Activated CD8-positive, alpha-beta T cell treated with anti-CD3 and anti-CD28 coated beads for 36 hours (primary cell): ENCODE measurements at regions of chr9 and their contacts with region 1.

Region 1: DNA sequence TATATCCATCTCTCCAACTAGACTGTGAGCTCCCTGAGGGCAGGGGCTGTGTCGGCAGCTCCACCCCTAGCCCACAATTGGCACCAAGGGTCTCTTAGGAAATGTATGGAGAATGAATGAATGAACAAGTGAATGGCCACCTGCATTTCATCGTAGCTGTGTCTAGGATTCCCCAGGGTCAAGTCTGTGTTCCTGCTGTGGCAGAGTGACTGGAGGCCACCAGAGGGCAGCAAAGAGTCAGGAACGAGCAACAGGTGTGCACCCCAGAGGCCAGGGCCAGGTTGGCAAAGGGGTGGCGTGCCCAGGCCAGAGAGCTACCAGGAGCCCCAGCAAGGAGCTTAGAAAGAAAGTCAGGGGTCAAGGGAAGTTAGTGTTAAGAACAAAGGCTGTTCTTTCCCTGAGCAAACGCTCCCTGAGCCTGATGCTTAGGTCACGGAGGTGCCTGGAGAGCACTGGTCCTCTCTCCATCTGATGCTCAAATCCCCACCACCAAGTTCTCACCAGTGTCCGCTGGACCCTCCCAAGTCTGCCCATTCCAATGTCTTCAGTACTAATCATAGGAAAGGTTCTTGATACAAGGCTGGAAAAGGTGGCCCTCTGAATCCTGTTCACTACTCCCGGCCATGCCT is 160.7 kb downstream of the PAX5 start:
- DNase-seq: peak; percentile 83
- ATAC-seq: peak; percentile 92
- H3K4me3 Mint-ChIP-seq: no peak overlapping the region
- H3K27ac Mint-ChIP-seq: no peak overlapping the region
- H3K4me1 Mint-ChIP-seq: no peaks in the 10 kb centered on the region
- H3K27me3 Mint-ChIP-seq: peaks cover 2% of the 10 kb centered on the region
- CTCF ChIP-seq: peak; percentile 93

Region 2: DNA sequence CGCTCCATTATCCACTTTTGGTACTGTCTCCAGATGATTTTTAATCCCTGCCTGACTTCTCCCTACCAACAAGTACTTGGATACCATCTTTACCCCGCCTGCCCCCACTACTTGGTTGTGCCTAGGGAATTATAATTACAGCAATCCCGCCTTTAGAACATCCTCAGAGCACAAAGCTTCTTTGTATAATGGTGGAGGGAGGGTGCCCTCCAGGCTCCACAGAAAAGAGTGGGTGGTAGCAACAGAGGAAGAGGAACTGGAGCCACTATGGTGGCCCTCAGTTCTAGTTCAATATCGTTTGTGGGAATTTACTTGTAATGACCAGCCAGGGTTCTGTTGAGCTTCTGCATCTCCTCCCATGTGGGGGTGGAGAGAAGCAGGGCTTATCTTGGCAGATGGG is 394.3 kb before region 1 on chr9:
- CTCF ChIA-PET with region 1: no interaction called
- POLR2A ChIA-PET with region 1: no interaction called
- intact Hi-C with region 1: no loop called
- DNase-seq: no peak
- ATAC-seq: no peak
- H3K4me3 Mint-ChIP-seq: no peak overlapping the region
- H3K27ac Mint-ChIP-seq: peak overlapping the region; percentile 68
- H3K4me1 Mint-ChIP-seq: peaks cover 28% of the 10 kb centered on the region
- H3K27me3 Mint-ChIP-seq: no peaks in the 10 kb centered on the region
- CTCF ChIP-seq: no peak

Region 3: GRCh38 chr9:36855448-36856315 is 17.7 kb before region 1 on chr9:
- CTCF ChIA-PET with region 1: interaction called, 22 read pairs
- POLR2A ChIA-PET with region 1: no interaction called
- intact Hi-C with region 1: no loop called
- DNase-seq: peak; percentile 67
- ATAC-seq: peak; percentile 92
- H3K4me3 Mint-ChIP-seq: no peak overlapping the region
- H3K27ac Mint-ChIP-seq: no peak overlapping the region
- H3K4me1 Mint-ChIP-seq: peaks cover 5% of the 10 kb centered on the region
- H3K27me3 Mint-ChIP-seq: peaks cover 3% of the 10 kb centered on the region
- CTCF ChIP-seq: no peak

Region 4: GRCh38 chr9:36884721-36885120 is 11.4 kb after region 1 on chr9:
- CTCF ChIA-PET with region 1: interaction called, 25 read pairs
- POLR2A ChIA-PET with region 1: no interaction called
- intact Hi-C with region 1: no loop called
- DNase-seq: no peak
- ATAC-seq: no peak
- H3K4me3 Mint-ChIP-seq: no peak overlapping the region
- H3K27ac Mint-ChIP-seq: no peak overlapping the region
- H3K4me1 Mint-ChIP-seq: no peaks in the 10 kb centered on the region
- H3K27me3 Mint-ChIP-seq: peaks cover 13% of the 10 kb centered on the region
- CTCF ChIP-seq: no peak

Region 5: DNA sequence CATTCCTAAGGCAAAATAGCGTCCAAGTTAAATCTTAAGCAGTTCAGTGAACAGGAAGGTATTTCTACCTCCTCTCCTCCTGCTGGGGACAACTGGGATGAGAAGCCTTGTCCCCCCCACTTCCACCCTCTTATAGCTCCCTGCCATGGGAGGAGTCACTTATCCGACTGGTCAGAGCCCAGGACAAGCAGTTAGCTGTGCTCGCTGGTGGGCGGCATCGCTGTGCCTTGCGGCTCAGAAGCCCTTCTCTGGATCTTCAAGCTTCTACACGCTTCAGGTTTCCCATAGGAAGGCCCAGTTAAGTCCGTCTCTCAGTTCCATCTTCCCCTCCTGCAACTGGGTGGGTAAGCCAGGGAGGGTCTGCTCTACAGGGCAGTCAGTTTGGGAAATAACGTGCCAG is 83.5 kb after region 1 on chr9:
- CTCF ChIA-PET with region 1: interaction called, 13 read pairs
- POLR2A ChIA-PET with region 1: no interaction called
- intact Hi-C with region 1: no loop called
- DNase-seq: no peak
- ATAC-seq: no peak
- H3K4me3 Mint-ChIP-seq: no peak overlapping the region
- H3K27ac Mint-ChIP-seq: no peak overlapping the region
- H3K4me1 Mint-ChIP-seq: peaks cover 2% of the 10 kb centered on the region
- H3K27me3 Mint-ChIP-seq: peaks cover 43% of the 10 kb centered on the region
- CTCF ChIP-seq: no peak

Region 6: GRCh38 chr9:36985061-36985768 is 111.9 kb after region 1 on chr9:
- CTCF ChIA-PET with region 1: interaction called, 105 read pairs
- POLR2A ChIA-PET with region 1: no interaction called
- intact Hi-C with region 1: loop called (anchors 2 kb)
- DNase-seq: no peak
- ATAC-seq: no peak
- H3K4me3 Mint-ChIP-seq: no peak overlapping the region
- H3K27ac Mint-ChIP-seq: no peak overlapping the region
- H3K4me1 Mint-ChIP-seq: peaks cover 13% of the 10 kb centered on the region
- H3K27me3 Mint-ChIP-seq: peaks cover 58% of the 10 kb centered on the region
- CTCF ChIP-seq: no peak

Region 7: DNA sequence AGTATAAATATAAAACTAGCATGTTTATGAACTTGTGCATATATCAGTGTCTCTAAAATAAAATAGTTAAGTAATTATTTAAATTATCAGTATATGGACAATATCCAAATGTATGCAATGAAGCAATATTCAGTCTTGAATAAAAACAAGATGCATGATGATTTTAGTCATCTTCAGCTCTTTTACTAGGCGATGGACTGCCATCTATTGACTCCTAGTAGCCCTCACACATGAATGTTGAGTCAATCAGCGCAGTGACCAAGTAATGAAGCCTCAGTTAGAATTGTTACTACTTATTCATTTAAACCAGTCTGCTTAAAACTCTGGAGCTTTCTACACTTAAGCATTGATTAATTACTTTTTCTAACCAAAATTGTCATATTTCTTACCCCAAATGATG is 456.2 kb after region 1 on chr9:
- CTCF ChIA-PET with region 1: interaction called, 15 read pairs
- POLR2A ChIA-PET with region 1: no interaction called
- intact Hi-C with region 1: no loop called
- DNase-seq: peak; percentile 16
- ATAC-seq: peak; percentile 60
- H3K4me3 Mint-ChIP-seq: no peak overlapping the region
- H3K27ac Mint-ChIP-seq: no peak overlapping the region
- H3K4me1 Mint-ChIP-seq: peaks cover 5% of the 10 kb centered on the region
- H3K27me3 Mint-ChIP-seq: no peaks in the 10 kb centered on the region
- CTCF ChIP-seq: peak; percentile 20

Region 8: GRCh38 chr9:37617832-37618231 is 744.5 kb after region 1 on chr9:
- CTCF ChIA-PET with region 1: no interaction called
- POLR2A ChIA-PET with region 1: no interaction called
- intact Hi-C with region 1: no loop called
- DNase-seq: no peak
- ATAC-seq: no peak
- H3K4me3 Mint-ChIP-seq: no peak overlapping the region
- H3K27ac Mint-ChIP-seq: no peak overlapping the region
- H3K4me1 Mint-ChIP-seq: no peaks in the 10 kb centered on the region
- H3K27me3 Mint-ChIP-seq: no peaks in the 10 kb centered on the region
- CTCF ChIP-seq: no peak